HEK293T (cell line): ENCODE measurements at regions of chr14 and their contacts with region 1.

Region 1: GRCh38 chr14:55731881-55732498 is 152.0 kb downstream of the KTN1 start:
- DNase-seq: peak; percentile 22

Region 2: GRCh38 chr14:55681088-55681487 is 50.9 kb before region 1 on chr14:
- CTCF ChIA-PET with region 1: no interaction called
- POLR2A ChIA-PET with region 1: no interaction called
- DNase-seq: no peak

Region 3: GRCh38 chr14:56339855-56340701 is 608.1 kb after region 1 on chr14:
- CTCF ChIA-PET with region 1: interaction called, 13 read pairs
- POLR2A ChIA-PET with region 1: no interaction called
- DNase-seq: peak; percentile 61

Region 4: DNA sequence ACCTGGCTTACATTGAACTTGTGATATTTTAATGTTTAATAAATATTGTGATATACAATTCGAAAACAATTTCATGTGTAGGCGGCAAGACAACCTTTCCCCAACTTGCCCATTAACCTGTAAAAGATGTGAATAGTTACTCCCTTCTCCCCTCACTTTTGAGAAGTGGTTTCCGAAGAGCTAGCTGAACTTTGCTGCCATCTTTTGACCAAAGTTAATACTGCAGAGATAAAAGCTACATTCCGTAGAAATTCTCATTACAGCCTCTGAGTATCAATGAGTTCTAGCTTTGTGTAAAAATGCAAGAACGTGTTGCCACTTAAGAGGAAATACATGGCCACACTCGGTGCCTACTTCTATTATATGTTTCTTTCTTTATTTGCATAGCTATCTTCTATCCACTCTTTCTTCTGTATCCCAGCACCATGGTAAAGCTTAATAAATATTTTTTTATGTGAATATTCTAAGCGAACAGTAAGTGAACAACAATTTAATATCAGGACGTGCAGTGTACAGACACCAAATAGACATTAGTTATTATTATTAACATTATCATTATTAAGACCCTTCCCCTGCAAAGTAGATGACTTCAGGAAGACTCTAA is 742.5 kb after region 1 on chr14:
- CTCF ChIA-PET with region 1: interaction called, 10 read pairs
- POLR2A ChIA-PET with region 1: no interaction called
- DNase-seq: peak; percentile 53